Caco-2 (cell line): ENCODE measurements at regions of chr11 and their contacts with region 1.

Region 1: DNA sequence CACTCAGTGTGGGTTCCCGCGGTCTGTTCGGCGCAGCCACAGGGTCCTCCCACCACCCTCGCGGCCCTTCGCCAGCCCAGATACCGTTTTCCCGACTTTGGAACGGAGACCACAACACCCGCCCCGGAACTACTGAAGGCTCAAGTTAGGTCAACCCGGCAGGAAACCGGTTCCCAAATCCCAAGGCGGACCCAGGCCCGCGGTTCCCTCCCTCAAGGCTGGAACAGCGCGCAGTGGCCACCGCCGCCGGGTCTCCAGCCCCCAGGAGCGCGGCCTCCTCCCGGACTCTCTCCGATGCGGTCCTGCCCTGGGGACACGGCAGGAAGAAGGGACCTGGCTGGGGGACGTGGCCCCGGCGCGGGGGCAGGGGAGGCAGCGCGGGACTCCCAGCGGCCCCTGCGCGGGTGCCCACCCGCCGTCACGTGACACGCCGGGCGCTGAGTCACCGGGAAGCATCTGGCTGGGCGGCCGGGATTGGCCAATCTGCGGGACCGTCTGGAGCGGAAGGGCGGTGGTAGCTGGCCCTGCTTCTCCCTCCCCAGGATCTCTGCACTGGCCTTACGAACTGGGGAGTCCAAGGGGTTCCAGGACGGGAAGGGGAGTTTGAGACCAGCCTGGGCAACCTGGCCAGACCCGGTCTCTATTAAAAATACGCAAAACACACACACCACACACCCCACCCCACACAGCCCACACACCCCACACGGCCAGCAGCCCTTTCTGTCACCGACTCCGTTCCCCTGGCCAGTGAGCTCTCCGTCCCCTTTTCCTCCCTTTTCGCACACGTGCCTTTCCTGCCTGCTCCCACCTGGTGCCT is 21.5 kb upstream of the MALAT1 start:
- DNase-seq: peak; percentile 96 to 98
- H3K4me3 ChIP-seq: peak overlapping the region; percentile 75
- H3K4me3 Mint-ChIP-seq: peak overlapping the region; percentile 90
- H3K27ac Mint-ChIP-seq: peak overlapping the region; percentile 95
- H3K4me1 ChIP-seq: peaks cover 46% of the 10 kb centered on the region
- H3K4me1 Mint-ChIP-seq: peaks cover 18% of the 10 kb centered on the region
- H3K27me3 ChIP-seq: no peaks in the 10 kb centered on the region
- H3K27me3 Mint-ChIP-seq: no peaks in the 10 kb centered on the region
- CTCF ChIP-seq: no peak

Region 2: GRCh38 chr11:65262381-65262680 is 215.0 kb before region 1 on chr11:
- CTCF ChIA-PET with region 1: no interaction called
- POLR2A ChIA-PET with region 1: no interaction called
- intact Hi-C with region 1: no loop called
- DNase-seq: no peak
- H3K4me3 ChIP-seq: peak overlapping the region; percentile 71
- H3K4me3 Mint-ChIP-seq: peak overlapping the region; percentile 81
- H3K27ac Mint-ChIP-seq: peak overlapping the region; percentile 70
- H3K4me1 ChIP-seq: no peaks in the 10 kb centered on the region
- H3K4me1 Mint-ChIP-seq: peaks cover 22% of the 10 kb centered on the region
- H3K27me3 ChIP-seq: no peaks in the 10 kb centered on the region
- H3K27me3 Mint-ChIP-seq: no peaks in the 10 kb centered on the region
- CTCF ChIP-seq: no peak

Region 3: DNA sequence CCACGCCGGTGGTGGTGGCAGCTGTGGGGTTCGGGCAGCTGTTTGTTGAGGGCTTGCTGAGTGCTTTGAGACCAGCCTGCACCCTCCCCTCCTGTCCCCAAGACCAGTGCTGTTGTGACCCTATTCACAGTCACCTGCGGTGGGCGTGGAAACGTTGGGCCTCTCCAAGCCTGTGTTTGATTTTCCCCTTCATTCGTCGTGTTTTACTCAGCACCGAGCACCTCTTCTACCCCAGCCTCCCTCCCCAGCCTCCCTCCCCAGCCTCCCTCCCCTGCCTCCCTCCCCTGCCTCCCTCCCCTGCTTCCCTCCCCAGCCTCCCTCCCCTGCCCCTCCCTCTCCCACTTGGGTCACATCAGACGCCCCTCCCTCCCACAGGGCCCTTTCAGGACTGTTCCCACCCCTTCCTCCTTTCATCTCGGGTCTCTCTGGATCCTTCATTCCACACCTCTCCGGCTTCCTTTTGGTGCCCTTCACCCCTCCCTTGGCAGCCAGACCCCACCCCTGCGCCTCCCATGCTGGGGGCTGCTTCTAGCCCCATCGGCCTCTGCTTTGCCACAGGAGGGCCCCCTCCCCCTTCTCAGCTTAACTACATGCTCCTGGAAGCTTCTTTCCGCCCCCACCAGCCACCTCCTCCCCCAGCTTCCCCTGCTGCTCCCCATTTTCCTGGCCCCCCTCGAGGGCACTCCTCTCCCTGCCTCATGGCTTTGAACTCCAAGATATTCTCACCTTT is 76.1 kb before region 1 on chr11:
- CTCF ChIA-PET with region 1: interaction called, 12 read pairs
- POLR2A ChIA-PET with region 1: no interaction called
- intact Hi-C with region 1: no loop called
- DNase-seq: no peak
- H3K4me3 ChIP-seq: no peak overlapping the region
- H3K4me3 Mint-ChIP-seq: no peak overlapping the region
- H3K27ac Mint-ChIP-seq: no peak overlapping the region
- H3K4me1 ChIP-seq: 0 out of 2 replicates have a peak, but pooled peaks cover 3% of the 10 kb centered on the region
- H3K4me1 Mint-ChIP-seq: peaks cover 4% of the 10 kb centered on the region
- H3K27me3 ChIP-seq: no peaks in the 10 kb centered on the region
- H3K27me3 Mint-ChIP-seq: no peaks in the 10 kb centered on the region
- CTCF ChIP-seq: no peak

Region 4: GRCh38 chr11:65440831-65441499 is 36.4 kb before region 1 on chr11:
- CTCF ChIA-PET with region 1: interaction called, 15 read pairs
- POLR2A ChIA-PET with region 1: no interaction called
- intact Hi-C with region 1: no loop called
- DNase-seq: no peak
- H3K4me3 ChIP-seq: no peak overlapping the region
- H3K4me3 Mint-ChIP-seq: peak overlapping the region; percentile 20
- H3K27ac Mint-ChIP-seq: peak overlapping the region; percentile 91
- H3K4me1 ChIP-seq: peaks cover 37% of the 10 kb centered on the region
- H3K4me1 Mint-ChIP-seq: peaks cover 47% of the 10 kb centered on the region
- H3K27me3 ChIP-seq: no peaks in the 10 kb centered on the region
- H3K27me3 Mint-ChIP-seq: no peaks in the 10 kb centered on the region
- CTCF ChIP-seq: no peak

Region 5: DNA sequence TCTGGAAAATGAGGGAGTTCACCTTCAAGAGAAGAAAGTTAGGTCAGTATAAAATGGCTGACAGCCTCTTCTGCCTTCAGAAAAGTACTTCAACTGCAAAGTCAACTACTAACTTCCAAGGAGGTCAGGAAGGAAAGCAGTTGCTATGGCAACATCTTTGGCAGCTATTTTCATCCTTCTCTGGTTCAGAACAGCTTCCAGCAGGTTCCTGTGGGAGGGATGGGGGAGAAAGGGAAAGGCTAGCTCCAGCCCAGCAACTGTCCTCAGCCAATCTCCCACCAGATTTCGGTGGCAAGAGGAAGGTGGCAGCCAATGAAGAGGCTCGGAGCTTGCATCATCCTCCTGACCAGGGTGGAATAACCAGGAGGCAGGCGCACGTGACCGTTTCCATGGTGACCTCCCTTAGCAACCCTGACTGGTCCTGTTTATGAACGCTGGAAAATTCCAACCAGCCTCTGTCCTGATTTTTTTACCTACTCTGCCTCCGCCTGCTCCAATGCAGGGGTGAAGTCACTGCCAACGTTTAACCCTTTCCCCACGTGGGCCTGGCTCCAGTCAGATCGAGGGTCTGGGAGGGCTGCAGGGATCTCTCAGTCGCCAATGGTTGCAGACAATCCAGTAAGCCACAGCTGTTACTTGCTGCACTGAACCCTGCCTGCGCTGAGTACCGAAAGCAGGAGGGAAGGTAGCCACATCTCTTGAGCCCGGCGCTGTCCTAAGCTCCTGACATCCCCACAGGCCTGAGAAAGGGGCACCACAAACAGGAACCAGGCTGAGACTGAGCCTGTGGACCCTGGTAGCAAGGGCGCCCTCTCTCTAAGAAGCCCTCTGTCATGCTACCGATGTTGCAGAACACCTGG is 10.3 kb after region 1 on chr11:
- CTCF ChIA-PET with region 1: interaction called, 71 read pairs
- POLR2A ChIA-PET with region 1: interaction called, 177 read pairs
- intact Hi-C with region 1: loop called (anchors 1 kb)
- DNase-seq: peak; percentile 99 to 100
- H3K4me3 ChIP-seq: peak overlapping the region; percentile 5
- H3K4me3 Mint-ChIP-seq: peak overlapping the region; percentile 74
- H3K27ac Mint-ChIP-seq: peak overlapping the region; percentile 100
- H3K4me1 ChIP-seq: peaks cover 74% of the 10 kb centered on the region
- H3K4me1 Mint-ChIP-seq: peaks cover 58% of the 10 kb centered on the region
- H3K27me3 ChIP-seq: no peaks in the 10 kb centered on the region
- H3K27me3 Mint-ChIP-seq: no peaks in the 10 kb centered on the region
- CTCF ChIP-seq: no peak

Region 6: GRCh38 chr11:65497141-65498041 is 20.0 kb after region 1 on chr11:
- CTCF ChIA-PET with region 1: interaction called, 31 read pairs
- POLR2A ChIA-PET with region 1: interaction called, 213 read pairs
- intact Hi-C with region 1: loop called (anchors 1 kb)
- DNase-seq: peak; percentile 99
- H3K4me3 ChIP-seq: peak overlapping the region; percentile 81
- H3K4me3 Mint-ChIP-seq: no peak overlapping the region
- H3K27ac Mint-ChIP-seq: no peak overlapping the region
- H3K4me1 ChIP-seq: peaks cover 37% of the 10 kb centered on the region
- H3K4me1 Mint-ChIP-seq: peaks cover 35% of the 10 kb centered on the region
- H3K27me3 ChIP-seq: no peaks in the 10 kb centered on the region
- H3K27me3 Mint-ChIP-seq: peaks cover 3% of the 10 kb centered on the region
- CTCF ChIP-seq: peak in 1 of 2 experiments; percentile 17

Region 7: DNA sequence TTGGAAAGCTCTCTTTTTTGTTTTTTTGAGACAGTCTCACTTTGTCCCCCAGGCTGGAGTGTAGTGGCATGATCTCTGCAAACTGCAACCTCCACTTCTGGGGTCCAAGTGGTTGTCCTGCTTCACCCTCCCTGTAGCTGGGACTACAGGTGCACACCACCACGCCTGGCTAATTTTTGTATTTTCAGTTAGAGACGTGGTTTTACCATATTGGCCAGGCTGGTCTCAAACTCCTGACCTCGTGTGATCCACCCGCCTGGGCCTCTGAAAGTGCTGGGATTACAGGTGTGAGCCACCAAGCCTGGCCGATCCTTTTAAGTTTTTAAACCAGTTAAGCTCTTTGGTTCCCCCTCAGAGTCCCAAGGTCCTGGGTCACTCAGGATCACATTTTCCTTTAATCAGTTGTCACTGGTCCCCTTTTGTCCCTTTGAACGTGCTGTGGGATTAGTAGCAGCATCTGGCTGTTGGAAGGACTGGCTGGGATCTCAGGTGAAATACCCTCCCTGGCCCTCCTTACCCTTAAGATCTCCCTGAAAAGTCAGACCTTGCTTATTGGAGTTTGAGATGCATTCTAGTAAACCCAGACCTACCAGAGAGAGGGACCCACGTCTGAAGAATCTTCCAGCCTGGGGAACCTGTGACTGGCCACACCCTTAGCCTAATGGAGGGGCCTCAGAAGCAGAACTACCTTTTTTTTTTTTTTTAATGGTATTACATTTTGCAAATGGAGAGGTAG is 29.6 kb after region 1 on chr11:
- CTCF ChIA-PET with region 1: interaction called, 52 read pairs
- POLR2A ChIA-PET with region 1: interaction called, 84 read pairs
- intact Hi-C with region 1: no loop called
- DNase-seq: peak; percentile 72 to 89
- H3K4me3 ChIP-seq: no peak overlapping the region
- H3K4me3 Mint-ChIP-seq: no peak overlapping the region
- H3K27ac Mint-ChIP-seq: no peak overlapping the region
- H3K4me1 ChIP-seq: peaks cover 34% of the 10 kb centered on the region
- H3K4me1 Mint-ChIP-seq: peaks cover 62% of the 10 kb centered on the region
- H3K27me3 ChIP-seq: no peaks in the 10 kb centered on the region
- H3K27me3 Mint-ChIP-seq: peaks cover 2% of the 10 kb centered on the region
- CTCF ChIP-seq: no peak